Prostate gland (tissue), 2 donors: ENCODE measurements at regions of chr11 and their contacts with region 1.

Region 1: DNA sequence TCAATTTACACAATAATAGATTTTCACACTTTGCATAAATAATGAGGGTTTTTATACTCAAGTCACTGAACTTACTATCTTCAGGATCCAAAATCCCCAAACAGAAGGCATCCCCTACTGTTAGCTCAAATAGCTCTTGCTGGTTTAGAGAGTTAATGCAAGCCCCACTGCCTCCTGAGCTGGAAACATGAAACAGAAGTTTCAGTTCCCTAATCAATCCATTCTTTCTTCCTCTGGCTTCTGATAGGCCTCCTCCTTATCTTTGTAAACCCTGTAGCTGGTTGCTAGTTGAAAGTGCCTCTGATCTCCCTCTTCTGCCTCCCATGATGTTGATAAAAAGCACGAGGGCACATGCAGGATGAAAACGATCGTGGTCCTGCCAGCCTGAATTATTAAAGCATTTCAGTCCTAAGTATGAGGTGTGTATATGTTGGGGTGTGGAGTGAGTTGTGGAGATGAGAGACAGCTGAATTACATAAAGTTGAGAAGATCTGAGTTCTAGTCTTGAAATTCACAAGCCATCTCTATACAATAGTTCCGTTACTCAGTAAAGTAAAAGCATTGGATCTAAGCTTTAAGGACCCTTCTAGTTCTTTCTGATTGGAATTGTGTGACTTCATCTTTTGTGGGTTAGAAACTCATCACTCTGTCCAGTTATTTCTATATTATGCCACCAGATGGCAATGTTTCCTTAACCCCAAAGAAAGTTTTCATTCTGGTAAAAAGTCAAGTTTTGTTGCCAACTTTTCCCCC is 35.0 kb upstream of the EHF start:
- DNase-seq: peak; percentile 44
- H3K4me3 ChIP-seq: no peak overlapping the region
- H3K27ac ChIP-seq: peak overlapping the region; percentile 61 to 71
- H3K4me1 ChIP-seq: peaks cover 7% of the 10 kb centered on the region
- H3K27me3 ChIP-seq: no peaks in the 10 kb centered on the region
- CTCF ChIP-seq: peak; percentile 63 to 88 (median 77)
- POLR2A ChIP-seq: no peak

Region 2: DNA sequence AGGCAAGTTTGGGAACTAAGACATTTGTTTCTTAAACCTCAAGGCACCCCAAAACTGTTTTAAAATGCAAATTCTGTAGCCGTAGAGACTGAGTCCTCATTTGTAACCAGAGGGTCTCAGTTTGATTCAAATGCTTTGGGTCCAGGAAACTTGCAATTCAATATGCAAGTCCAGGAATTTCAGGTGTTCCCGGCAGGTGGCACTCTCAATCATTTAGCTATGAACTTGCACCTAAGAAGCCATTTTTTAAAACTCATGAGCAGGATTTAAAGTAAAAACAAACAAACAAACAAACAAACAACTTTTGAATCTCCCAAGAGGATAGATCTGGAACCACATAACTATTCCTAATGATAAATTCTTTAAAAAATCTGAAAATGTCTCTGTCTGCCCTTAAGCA is 219.4 kb before region 1 on chr11:
- intact Hi-C with region 1: no loop called
- DNase-seq: no peak
- H3K4me3 ChIP-seq: no peak overlapping the region
- H3K27ac ChIP-seq: no peak overlapping the region
- H3K4me1 ChIP-seq: no peaks in the 10 kb centered on the region
- H3K27me3 ChIP-seq: no peaks in the 10 kb centered on the region
- CTCF ChIP-seq: peak in 3 of 4 experiments; percentile 30 to 55 (median 40)
- POLR2A ChIP-seq: no peak

Region 3: DNA sequence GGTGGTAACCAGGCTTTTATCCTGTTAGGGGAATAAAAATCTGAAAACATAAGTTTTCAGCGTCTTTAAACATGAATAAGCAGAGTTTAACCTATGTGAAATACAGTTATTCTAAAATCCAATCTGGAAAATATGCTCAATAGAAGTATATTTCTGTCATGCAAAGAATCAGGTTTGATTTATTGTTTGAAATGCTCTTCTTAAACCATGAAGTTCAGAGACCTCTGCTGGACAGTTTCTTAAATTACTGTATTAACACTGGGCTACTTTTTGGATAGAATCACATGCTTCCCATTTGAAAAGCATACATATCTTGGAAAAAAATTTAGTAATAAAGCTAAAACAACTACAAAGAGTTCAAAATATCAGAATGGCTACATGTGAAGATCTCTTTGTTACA is 304.9 kb after region 1 on chr11:
- intact Hi-C with region 1: loop called (anchors 2 kb)
- DNase-seq: no peak
- H3K4me3 ChIP-seq: no peak overlapping the region
- H3K27ac ChIP-seq: no peak overlapping the region
- H3K4me1 ChIP-seq: no peaks in the 10 kb centered on the region
- H3K27me3 ChIP-seq: no peaks in the 10 kb centered on the region
- CTCF ChIP-seq: peak in 3 of 4 experiments; percentile 51 to 91 (median 76)
- POLR2A ChIP-seq: no peak